Activated T-helper 1 cell treated with anti-CD3 and anti-CD28 coated beads, Interleukin-12 subunit alpha, Interleukin-12 subunit beta, Interleukin-2, Interleukin-4 antibody, amounts not matched to agents 30 ng/mL and 10 ng/mL and 1 ng/mL, durations not matched to agents 14 hours and 24 hours and 36 hours (primary cell): ENCODE measurements at regions of chr2 and their contacts with region 1.

Region 1: DNA sequence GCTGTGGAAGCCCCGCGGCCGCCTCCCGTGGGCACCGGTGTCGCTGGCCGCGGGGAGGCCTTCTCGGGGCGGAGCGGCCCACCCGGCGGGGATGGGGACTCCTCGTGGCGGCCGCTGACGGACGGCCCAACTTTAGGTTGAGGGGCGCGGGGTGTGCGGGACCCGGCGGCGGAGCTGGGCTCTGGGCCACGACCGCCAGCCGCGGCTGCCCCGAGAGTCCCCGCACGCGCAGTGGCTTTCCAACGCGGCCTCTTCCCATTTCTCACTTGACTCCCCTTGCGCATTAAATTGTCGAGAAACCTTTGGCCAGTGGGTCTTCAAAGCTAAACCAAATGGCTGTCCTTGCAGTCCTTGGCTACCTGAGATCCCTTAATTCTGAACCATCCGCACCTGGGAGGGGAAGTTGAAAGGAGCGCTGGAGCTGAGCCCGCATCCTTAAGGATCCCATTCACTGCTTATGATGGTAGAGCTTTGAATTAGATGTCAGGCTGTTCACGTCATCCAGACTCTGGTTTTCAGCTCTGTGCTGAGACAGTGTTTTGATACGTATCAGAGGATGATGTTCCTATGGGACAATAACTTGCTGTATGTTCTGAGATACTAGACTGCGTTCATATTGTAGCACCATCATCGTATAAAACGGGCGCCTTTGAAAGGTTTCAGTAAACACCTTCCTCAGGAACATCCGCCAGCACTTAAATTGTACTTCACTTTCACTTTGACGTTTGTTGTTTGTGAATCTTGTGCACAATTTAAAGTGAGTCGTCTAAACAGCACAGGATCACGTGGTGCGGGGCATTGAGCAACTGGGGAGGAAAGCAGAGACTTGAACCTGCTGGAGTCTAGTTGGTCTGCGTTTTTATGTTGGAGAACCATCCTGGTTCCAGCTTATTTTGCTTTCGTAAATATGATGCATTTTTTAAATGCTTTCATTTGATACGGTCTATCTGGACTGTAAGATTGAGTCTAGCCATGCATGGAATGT is 874 bp downstream of the CLIP4 start:
- DNase-seq: peak; percentile 74
- H3K4me3 Mint-ChIP-seq: peak overlapping the region; percentile 93
- H3K27ac Mint-ChIP-seq: peak overlapping the region; percentile 92
- H3K4me1 Mint-ChIP-seq: peaks cover 65% of the 10 kb centered on the region
- H3K27me3 Mint-ChIP-seq: peaks cover 9% of the 10 kb centered on the region

Region 2: DNA sequence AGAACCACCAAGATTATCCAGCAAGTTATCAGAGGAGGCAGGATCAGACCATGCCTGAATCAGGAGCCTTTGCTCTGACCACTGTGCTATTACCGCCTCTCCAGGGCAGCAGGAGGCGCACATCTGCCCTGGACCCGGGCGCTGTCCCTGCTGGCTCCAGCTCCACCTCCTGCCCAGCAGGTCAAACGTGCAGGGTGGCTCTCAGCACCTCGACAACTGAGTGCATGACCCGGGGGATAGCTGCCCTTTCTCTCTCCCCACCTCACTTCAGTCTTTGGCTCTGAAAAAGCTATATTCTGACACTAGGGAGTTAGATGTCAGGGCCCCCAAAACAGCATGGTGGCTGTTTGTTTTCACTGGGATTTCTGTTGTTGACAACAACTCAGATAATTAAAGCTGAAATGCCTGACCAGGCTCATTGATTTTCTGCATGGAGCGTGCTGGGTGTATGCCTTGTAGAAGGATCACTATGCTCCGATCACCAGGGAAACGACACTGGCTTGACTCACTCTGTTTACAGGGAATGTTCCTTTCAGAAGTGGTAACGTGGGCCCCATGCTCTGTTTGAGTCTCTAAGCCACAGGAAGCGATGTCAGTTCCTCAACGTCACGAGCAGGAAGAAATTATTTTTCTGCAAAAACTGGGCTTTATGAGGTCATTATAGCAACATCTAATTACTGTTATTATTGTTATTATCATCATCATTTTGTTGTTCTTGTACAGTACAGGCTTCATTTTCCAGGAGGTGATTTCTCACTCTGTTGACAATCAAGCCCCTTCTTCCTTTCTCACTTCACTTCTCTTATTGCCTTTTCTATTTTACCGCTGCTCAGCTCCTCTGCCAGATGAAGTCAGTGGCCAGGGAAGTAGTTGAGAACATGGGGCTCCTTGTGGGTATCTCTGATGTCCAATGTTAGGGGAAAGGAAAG is 494.7 kb before region 1 on chr2:
- intact Hi-C with region 1: no loop called
- DNase-seq: peak; percentile 77
- H3K4me3 Mint-ChIP-seq: peak overlapping the region; percentile 67
- H3K27ac Mint-ChIP-seq: peak overlapping the region; percentile 96
- H3K4me1 Mint-ChIP-seq: peaks cover 5% of the 10 kb centered on the region
- H3K27me3 Mint-ChIP-seq: no peaks in the 10 kb centered on the region

Region 3: DNA sequence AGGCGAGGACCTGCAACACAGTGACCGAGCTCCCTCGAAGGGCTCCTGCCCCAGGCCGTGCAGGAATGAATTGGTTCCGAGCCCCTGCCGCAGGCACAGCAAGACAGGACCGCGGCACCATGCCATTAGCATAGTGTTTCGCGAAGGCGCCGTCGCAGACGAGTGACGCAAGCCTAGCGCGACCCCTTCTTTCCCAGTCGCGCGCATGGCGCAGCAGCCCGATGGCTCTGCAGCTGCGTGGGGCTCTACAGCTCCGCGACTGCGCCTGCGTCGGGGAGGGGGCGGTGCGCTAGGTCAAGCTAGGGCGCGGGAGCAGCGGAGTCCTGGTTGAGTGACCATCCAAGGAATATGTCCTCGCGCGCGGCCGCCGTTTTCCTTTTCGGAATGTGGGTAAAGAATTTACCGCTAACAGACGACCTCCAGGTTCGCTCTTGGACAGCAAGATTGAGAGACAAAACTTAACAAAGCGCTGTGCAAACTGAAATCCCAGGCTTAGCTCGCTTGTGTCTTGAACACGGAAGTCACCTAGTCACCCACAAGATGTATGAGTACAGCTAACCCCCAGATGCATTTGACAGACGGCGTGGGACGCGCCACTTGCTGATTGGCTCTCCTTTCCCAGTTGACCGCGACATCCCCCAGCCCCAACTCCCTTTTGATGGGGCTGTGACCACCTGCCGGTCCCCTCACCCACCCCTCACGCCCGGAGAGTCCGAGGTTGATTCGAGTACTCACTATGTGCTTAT is 245.8 kb before region 1 on chr2 and contains the start of gene TRMT61B:
- intact Hi-C with region 1: loop called (anchors 5 kb)
- DNase-seq: peak; percentile 97
- H3K4me3 Mint-ChIP-seq: peak within 1 kb of the TSS; percentile 97
- H3K27ac Mint-ChIP-seq: peak within 1 kb of the TSS; percentile 93
- H3K4me1 Mint-ChIP-seq: peaks cover 23% of the 10 kb centered on the region
- H3K27me3 Mint-ChIP-seq: peaks cover 6% of the 10 kb centered on the region
- total RNA-seq, gene TRMT61B: 18.4 and 21.4 TPM in 2 replicates

Region 4: GRCh38 chr2:29014811-29015421 is 101.2 kb before region 1 on chr2:
- intact Hi-C with region 1: loop called (anchors 1 kb)
- DNase-seq: peak; percentile 65
- H3K4me3 Mint-ChIP-seq: peak overlapping the region; percentile 88
- H3K27ac Mint-ChIP-seq: peak overlapping the region; percentile 99
- H3K4me1 Mint-ChIP-seq: peaks cover 65% of the 10 kb centered on the region
- H3K27me3 Mint-ChIP-seq: peaks cover 2% of the 10 kb centered on the region

Region 5: GRCh38 chr2:29130295-29130694 is 14.2 kb after region 1 on chr2:
- intact Hi-C with region 1: loop called (anchors 1 kb)
- DNase-seq: no peak
- H3K4me3 Mint-ChIP-seq: peak overlapping the region; percentile 56
- H3K27ac Mint-ChIP-seq: peak overlapping the region; percentile 35
- H3K4me1 Mint-ChIP-seq: peaks cover 31% of the 10 kb centered on the region
- H3K27me3 Mint-ChIP-seq: no peaks in the 10 kb centered on the region